ENCODE measurements at regions of chr14 and their contacts with region 1.

Region 1: DNA sequence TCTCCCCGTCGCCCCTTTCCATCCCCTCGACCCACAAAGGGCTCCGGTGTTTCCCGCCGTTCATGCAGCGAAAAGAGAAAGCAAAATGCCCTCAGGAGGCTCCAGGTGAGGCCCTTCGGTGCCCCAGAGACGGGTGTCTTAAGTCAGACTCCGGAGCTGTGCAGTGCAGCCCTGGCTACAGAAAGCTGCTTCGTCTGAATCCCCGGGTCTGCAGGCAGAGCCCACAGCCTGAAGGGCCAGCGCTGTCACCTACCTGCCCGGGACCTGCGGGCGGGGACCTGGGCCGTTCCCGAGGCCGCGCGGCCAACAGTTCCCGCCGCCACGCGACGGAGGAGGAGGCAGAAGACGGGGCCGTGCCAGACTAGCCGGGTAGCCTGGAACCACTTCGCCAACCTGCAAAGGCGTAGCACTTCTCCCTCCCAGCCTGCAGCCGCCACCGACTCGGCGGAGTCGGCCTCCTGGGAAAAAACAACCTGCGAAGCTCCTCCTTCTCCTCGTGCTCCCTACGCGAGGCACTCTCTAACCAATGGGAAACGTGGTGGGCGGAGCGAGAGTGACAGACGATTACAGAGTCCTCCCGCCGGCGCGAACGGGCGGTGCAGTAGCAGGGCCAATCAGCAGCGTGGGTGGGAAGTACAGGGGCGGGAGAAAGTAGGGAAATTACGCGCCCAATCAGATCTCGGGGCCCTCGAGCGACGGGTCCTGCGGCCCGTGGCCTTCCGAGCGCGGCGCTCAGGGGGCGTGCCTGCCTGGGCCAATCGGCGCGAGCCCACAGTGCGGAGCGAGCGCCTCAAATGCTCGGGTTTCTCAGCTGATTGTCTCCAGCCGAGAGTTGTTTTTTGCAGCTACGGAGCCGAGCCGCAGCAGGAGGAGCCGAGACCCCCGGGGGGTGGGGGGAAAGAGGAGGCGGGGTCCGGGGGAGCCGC is at the starts of genes GPR137C and TXNDC16:
- DNase-seq: peak; percentile 98 to 100 (median 99)
- ATAC-seq: peak; percentile 85
- H3K4me3 ChIP-seq: peak within 1 kb of the TSS; percentile 77 to 86
- H3K4me3 Mint-ChIP-seq: peak within 1 kb of the TSS; percentile 95
- H3K27ac ChIP-seq: peak within 1 kb of the TSS; percentile 75 to 91
- H3K27ac Mint-ChIP-seq: peak within 1 kb of the TSS; percentile 90
- H3K4me1 ChIP-seq: peaks cover 21% of the 10 kb centered on the region
- H3K4me1 Mint-ChIP-seq: peaks cover 23% of the 10 kb centered on the region
- H3K27me3 ChIP-seq: no peaks in the 10 kb centered on the region
- H3K27me3 Mint-ChIP-seq: peaks cover 6% of the 10 kb centered on the region
- CTCF ChIP-seq: no peak
- total RNA-seq, gene GPR137C: 0.08 to 0.22 TPM
- total RNA-seq, gene TXNDC16: 10.8 to 13.4 TPM

Region 2: GRCh38 chr14:51239813-51240803 is 1312.2 kb before region 1 on chr14 and contains the start of gene TMX1:
- CTCF ChIA-PET with region 1: no interaction called
- POLR2A ChIA-PET with region 1: no interaction called
- intact Hi-C with region 1: loop called (anchors 5 to 10 kb)
- DNase-seq: peak; percentile 58 to 94 (median 85)
- ATAC-seq: peak; percentile 93
- H3K4me3 ChIP-seq: peak within 1 kb of the TSS; percentile 76 to 95
- H3K4me3 Mint-ChIP-seq: no peak within 1 kb of the TSS
- H3K27ac ChIP-seq: peak within 1 kb of the TSS; percentile 57 to 77
- H3K27ac Mint-ChIP-seq: no peak within 1 kb of the TSS
- H3K4me1 ChIP-seq: peaks cover 30% of the 10 kb centered on the region
- H3K4me1 Mint-ChIP-seq: peaks cover 24% of the 10 kb centered on the region
- H3K27me3 ChIP-seq: no peaks in the 10 kb centered on the region
- H3K27me3 Mint-ChIP-seq: no peaks in the 10 kb centered on the region
- CTCF ChIP-seq: no peak
- total RNA-seq, gene TMX1: 10.2 to 11.1 TPM

Region 3: GRCh38 chr14:51989293-51990234 is 562.8 kb before region 1 on chr14 and contains the start of gene RTRAF:
- CTCF ChIA-PET with region 1: no interaction called
- POLR2A ChIA-PET with region 1: no interaction called
- intact Hi-C with region 1: loop called (anchors 2 to 5 kb)
- DNase-seq: peak; percentile 77 to 97 (median 91)
- ATAC-seq: peak; percentile 96
- H3K4me3 ChIP-seq: peak within 1 kb of the TSS; percentile 65 to 84
- H3K4me3 Mint-ChIP-seq: peak within 1 kb of the TSS; percentile 94
- H3K27ac ChIP-seq: peak within 1 kb of the TSS; percentile 84 to 85
- H3K27ac Mint-ChIP-seq: peak within 1 kb of the TSS; percentile 94
- H3K4me1 ChIP-seq: peaks cover 15% of the 10 kb centered on the region
- H3K4me1 Mint-ChIP-seq: peaks cover 46% of the 10 kb centered on the region
- H3K27me3 ChIP-seq: no peaks in the 10 kb centered on the region
- H3K27me3 Mint-ChIP-seq: no peaks in the 10 kb centered on the region
- CTCF ChIP-seq: no peak
- total RNA-seq, gene RTRAF: 155 to 161 TPM

Region 4: DNA sequence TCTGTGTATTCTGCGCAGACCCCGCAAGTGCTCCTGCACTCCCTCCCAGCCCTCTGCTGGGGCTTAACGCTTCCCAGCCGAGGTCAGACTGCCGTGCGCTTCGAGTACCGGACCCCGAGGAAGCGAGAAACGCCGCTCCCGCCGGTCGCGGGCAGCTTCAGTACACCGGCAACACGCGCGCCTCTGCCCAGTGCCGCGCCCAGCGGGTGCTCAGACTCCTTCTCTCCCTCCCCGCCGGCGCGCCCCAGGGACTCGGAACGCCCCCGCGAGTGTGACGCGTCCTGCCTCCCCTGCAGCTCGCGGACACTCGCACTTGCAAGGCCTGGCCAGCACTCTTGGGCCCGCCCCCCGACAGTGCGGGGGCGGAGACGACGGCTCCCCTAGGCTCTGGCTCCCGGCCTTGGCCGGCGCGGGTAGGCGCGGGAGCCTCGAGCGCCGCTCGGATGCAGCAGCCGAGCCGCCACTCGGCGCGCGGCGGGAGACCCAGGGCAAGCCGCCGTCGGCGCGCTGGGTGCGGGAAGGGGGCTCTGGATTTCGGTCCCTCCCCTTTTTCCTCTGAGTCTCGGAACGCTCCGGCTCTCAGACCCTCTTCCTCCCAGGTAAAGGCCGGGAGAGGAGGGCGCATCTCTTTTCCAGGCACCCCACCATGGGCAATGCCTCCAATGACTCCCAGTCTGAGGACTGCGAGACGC is 238.3 kb before region 1 on chr14 and contains the start of gene PTGER2:
- CTCF ChIA-PET with region 1: no interaction called
- POLR2A ChIA-PET with region 1: interaction called, 3 read pairs
- intact Hi-C with region 1: loop called (anchors 5 kb)
- DNase-seq: peak; percentile 46 to 88 (median 73)
- ATAC-seq: peak; percentile 61
- H3K4me3 ChIP-seq: peak within 1 kb of the TSS; percentile 85 to 93
- H3K4me3 Mint-ChIP-seq: peak within 1 kb of the TSS; percentile 99
- H3K27ac ChIP-seq: peak within 1 kb of the TSS; percentile 70 to 71
- H3K27ac Mint-ChIP-seq: peak within 1 kb of the TSS; percentile 92
- H3K4me1 ChIP-seq: peaks cover 65% of the 10 kb centered on the region
- H3K4me1 Mint-ChIP-seq: peaks cover 83% of the 10 kb centered on the region
- H3K27me3 ChIP-seq: no peaks in the 10 kb centered on the region
- H3K27me3 Mint-ChIP-seq: peaks cover 10% of the 10 kb centered on the region
- CTCF ChIP-seq: no peak
- total RNA-seq, gene PTGER2: 3.5 to 4.3 TPM

Region 5: GRCh38 chr14:52706724-52707706 is 154.7 kb after region 1 on chr14 and contains the start of gene PSMC6:
- CTCF ChIA-PET with region 1: no interaction called
- POLR2A ChIA-PET with region 1: no interaction called
- intact Hi-C with region 1: loop called (anchors 1 to 5 kb)
- DNase-seq: peak; percentile 91 to 96 (median 95)
- ATAC-seq: peak; percentile 98
- H3K4me3 ChIP-seq: peak within 1 kb of the TSS; percentile 69 to 88
- H3K4me3 Mint-ChIP-seq: peak within 1 kb of the TSS; percentile 96
- H3K27ac ChIP-seq: peak within 1 kb of the TSS; percentile 66 to 84
- H3K27ac Mint-ChIP-seq: peak within 1 kb of the TSS; percentile 94
- H3K4me1 ChIP-seq: peaks cover 20% of the 10 kb centered on the region
- H3K4me1 Mint-ChIP-seq: peaks cover 33% of the 10 kb centered on the region
- H3K27me3 ChIP-seq: no peaks in the 10 kb centered on the region
- H3K27me3 Mint-ChIP-seq: no peaks in the 10 kb centered on the region
- CTCF ChIP-seq: no peak
- total RNA-seq, gene PSMC6: 108 to 122 TPM

Region 6: DNA sequence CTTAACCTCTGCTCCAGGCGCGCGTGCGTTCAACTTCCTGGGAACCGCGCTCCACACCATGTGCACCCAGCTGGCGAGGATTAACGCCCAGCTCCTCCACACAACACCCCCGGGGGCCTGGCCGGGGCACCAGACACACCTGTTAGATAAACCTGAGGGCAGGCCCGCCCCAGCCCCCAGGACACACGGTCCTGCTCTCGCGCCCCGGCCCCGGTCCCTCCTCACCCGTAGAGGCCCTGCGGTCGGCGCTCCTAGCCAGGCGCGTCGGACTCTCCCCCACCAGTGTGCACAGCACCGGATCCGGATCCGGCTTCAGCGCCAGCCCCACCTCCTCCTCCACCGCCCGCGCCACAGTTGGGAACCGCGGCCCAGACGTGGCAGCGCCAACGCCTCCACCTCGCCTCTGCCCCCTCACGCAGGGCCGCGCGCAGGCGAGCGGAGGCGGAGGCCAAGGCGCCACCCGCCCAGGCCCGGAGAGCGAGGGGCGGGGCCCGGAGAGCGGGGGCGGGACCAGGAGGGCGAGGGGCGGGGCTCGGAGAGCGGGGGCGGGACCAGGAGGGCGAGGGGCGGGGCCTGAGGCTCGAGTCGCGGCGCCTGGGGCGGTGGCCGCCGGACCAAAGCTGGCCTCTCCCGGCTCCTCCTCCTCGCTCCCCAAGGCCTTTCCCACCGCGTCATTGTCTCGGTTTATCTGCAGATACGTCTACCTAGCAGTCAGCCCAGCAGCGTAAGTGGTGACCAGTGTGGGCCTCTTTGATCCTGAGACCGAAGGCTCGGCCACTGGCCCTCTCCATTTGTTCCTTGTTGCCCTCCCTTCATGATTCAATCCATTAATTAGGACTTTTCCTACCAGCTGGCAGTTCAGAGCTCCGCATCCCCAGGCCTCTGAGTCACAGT is 239.1 kb after region 1 on chr14 and contains the start of gene GNPNAT1:
- CTCF ChIA-PET with region 1: no interaction called
- POLR2A ChIA-PET with region 1: interaction called, 3 read pairs
- intact Hi-C with region 1: loop called (anchors 1 to 2 kb)
- DNase-seq: peak; percentile 80 to 97 (median 88)
- ATAC-seq: peak; percentile 96
- H3K4me3 ChIP-seq: peak within 1 kb of the TSS; percentile 78 to 85
- H3K4me3 Mint-ChIP-seq: peak within 1 kb of the TSS; percentile 93
- H3K27ac ChIP-seq: peak within 1 kb of the TSS; percentile 65 to 74
- H3K27ac Mint-ChIP-seq: peak within 1 kb of the TSS; percentile 89
- H3K4me1 ChIP-seq: peaks cover 20% of the 10 kb centered on the region
- H3K4me1 Mint-ChIP-seq: peaks cover 40% of the 10 kb centered on the region
- H3K27me3 ChIP-seq: no peaks in the 10 kb centered on the region
- H3K27me3 Mint-ChIP-seq: no peaks in the 10 kb centered on the region
- CTCF ChIP-seq: no peak
- total RNA-seq, gene GNPNAT1: 5.6 to 7.5 TPM

Region 7: GRCh38 chr14:53152890-53153701 is 600.8 kb after region 1 on chr14 and contains the start of gene DDHD1:
- CTCF ChIA-PET with region 1: no interaction called
- POLR2A ChIA-PET with region 1: interaction called, 6 read pairs
- intact Hi-C with region 1: loop called (anchors 2 to 5 kb)
- DNase-seq: peak; percentile 73 to 93 (median 85)
- ATAC-seq: peak; percentile 85
- H3K4me3 ChIP-seq: peak within 1 kb of the TSS; percentile 86 to 93
- H3K4me3 Mint-ChIP-seq: peak within 1 kb of the TSS; percentile 99
- H3K27ac ChIP-seq: peak within 1 kb of the TSS; percentile 77 to 85
- H3K27ac Mint-ChIP-seq: peak within 1 kb of the TSS; percentile 99
- H3K4me1 ChIP-seq: peaks cover 33% of the 10 kb centered on the region
- H3K4me1 Mint-ChIP-seq: peaks cover 49% of the 10 kb centered on the region
- H3K27me3 ChIP-seq: no peaks in the 10 kb centered on the region
- H3K27me3 Mint-ChIP-seq: no peaks in the 10 kb centered on the region
- CTCF ChIP-seq: no peak
- total RNA-seq, gene DDHD1: 40.1 to 44.3 TPM

Region 8: GRCh38 chr14:53265025-53265424 is 712.7 kb after region 1 on chr14:
- CTCF ChIA-PET with region 1: no interaction called
- POLR2A ChIA-PET with region 1: no interaction called
- intact Hi-C with region 1: no loop called
- DNase-seq: no peak
- ATAC-seq: no peak
- H3K4me3 ChIP-seq: no peak overlapping the region
- H3K4me3 Mint-ChIP-seq: no peak overlapping the region
- H3K27ac ChIP-seq: no peak overlapping the region
- H3K27ac Mint-ChIP-seq: no peak overlapping the region
- H3K4me1 ChIP-seq: no peaks in the 10 kb centered on the region
- H3K4me1 Mint-ChIP-seq: no peaks in the 10 kb centered on the region
- H3K27me3 ChIP-seq: no peaks in the 10 kb centered on the region
- H3K27me3 Mint-ChIP-seq: no peaks in the 10 kb centered on the region
- CTCF ChIP-seq: no peak